Naive thymus-derived CD4-positive, alpha-beta T cell (primary cell): ENCODE measurements at regions of chr3 and their contacts with region 1.

Region 1: DNA sequence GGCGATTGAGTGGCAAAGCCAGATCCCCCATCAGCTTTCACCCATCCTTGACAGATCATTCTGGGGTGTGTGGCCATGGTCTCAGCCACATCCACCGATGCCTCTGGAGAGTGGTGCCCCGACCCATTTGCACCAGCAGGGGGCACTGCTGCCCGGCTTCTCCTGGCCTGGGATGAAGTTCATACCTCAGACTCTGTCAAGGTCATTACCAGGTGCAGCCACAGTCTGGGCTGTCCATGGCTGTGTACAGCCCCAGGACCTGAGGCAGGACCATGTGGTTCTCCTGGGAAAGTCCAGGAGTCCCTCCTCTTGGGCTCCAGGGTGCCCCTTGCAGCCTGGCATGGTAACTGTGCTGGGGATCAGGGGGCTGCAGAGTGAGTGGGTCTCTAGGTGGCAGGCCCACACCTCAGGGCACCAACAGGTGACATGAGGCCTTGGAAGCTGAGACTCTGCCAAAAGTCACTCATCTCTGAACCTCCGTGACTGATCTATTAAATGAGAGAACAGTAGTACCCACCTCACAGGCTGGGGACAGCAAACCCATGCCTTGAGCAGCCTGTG is 67.2 kb downstream of the CACNA2D2 start:
- DNase-seq: peak; percentile 48 to 81 (median 68)
- ATAC-seq: peak; percentile 92
- H3K4me3 ChIP-seq: no peak overlapping the region
- H3K4me3 Mint-ChIP-seq: no peak overlapping the region
- H3K27ac ChIP-seq: no peak overlapping the region
- H3K27ac Mint-ChIP-seq: no peak overlapping the region
- H3K4me1 ChIP-seq: no peaks in the 10 kb centered on the region
- H3K4me1 Mint-ChIP-seq: peaks cover 0 to 20% (median 4%) of the 10 kb centered on the region in 7 donors
- H3K27me3 ChIP-seq: no peaks in the 10 kb centered on the region
- H3K27me3 Mint-ChIP-seq: peaks cover 0 to 10% (median 0%) of the 10 kb centered on the region in 5 donors

Region 2: DNA sequence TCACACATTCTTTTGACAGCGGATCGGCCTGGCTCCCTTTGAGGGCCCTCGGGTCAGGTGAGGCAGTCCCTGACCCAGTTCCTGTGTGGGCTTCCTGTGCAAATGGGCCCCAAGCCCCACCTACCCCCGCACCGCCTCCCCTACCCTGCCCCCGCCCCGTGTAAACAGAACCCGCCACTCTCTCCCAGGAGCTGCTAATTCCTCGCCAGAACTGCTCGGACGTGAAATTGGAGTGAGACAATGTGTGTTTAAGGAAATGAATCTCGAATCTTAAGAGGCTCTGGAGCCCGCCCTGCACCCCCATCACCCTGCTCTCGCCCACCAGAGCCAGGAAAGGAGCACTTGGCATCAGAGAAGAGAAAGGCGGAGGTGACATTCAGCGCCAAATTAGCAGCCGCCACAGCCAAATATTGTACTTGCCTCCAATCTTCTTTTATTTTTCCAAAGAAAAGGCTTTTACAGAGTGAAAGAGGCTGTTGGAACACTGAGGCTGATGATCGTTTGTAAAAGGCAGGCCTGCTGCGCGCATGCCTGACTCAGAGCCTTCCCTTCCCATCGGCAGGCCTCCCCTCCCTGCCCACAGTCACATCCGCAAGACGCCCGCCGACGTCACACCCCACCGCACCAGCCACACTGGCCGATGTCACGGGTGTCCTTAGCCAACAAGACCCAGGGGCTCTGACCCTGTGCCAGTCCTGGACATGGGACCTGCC is 14.2 kb after region 1 on chr3:
- CTCF ChIA-PET with region 1: no interaction called
- POLR2A ChIA-PET with region 1: interaction called, 3 read pairs
- intact Hi-C with region 1: loop called in 1 of 2 experiments (anchors 1 kb)
- DNase-seq: peak; percentile 57 to 75 (median 66)
- ATAC-seq: peak; percentile 86
- H3K4me3 ChIP-seq: peak overlapping the region; percentile 60
- H3K4me3 Mint-ChIP-seq: peak overlapping the region; percentile 82 to 91 (median 86)
- H3K27ac ChIP-seq: peak overlapping the region; percentile 81
- H3K27ac Mint-ChIP-seq: peak overlapping the region; percentile 85 to 98 (median 96)
- H3K4me1 ChIP-seq: peaks cover 13 to 16% of the 10 kb centered on the region in 2 donors
- H3K4me1 Mint-ChIP-seq: peaks cover 10 to 33% (median 28%) of the 10 kb centered on the region in 7 donors
- H3K27me3 ChIP-seq: no peaks in the 10 kb centered on the region
- H3K27me3 Mint-ChIP-seq: no peaks in the 10 kb centered on the region

Region 3: DNA sequence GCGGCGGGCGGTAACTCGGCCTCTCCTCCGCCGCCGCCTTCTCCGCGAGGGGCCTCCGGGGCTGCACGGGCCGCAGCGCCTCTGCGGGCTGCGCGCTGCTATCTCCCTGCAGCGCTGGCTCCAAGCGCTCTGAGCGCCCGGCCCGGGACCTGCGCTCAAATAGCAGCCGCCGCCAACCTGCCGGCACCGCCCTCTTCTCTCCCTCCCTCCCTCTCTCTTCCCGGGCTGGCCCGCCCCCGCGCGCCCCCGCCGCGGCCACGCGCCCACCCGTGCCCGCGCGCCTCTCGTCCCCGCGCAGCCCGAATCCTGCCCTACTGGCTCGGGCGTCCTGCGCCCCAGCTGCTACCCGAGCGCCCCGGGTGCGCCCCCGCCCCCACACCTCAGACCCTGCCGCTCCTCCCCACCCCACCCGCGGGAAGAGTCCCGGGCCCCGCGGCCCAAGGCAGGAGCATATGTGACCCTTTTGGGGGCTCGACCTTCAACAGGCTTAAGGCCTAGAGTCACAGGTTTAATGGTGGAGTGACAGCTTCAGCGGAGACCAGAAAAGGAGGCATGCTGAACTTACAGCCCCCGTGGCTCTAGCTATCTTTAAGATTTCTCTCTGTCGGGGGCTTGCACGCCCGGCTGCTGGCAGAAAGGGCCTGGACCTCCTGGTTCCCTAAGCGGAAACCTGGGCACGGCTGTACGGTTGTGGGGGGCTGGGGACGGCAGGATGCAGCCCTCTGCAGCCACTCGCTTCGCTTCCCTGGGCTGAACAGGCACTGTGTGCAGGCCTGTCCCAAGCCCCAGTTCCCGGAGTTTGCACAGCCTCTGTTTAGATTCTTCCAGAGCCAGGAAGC is 67.5 kb after region 1 on chr3 and contains the start of gene CACNA2D2:
- CTCF ChIA-PET with region 1: interaction called, 3 read pairs
- POLR2A ChIA-PET with region 1: no interaction called
- intact Hi-C with region 1: loop called in 1 of 2 experiments (anchors 5 kb)
- DNase-seq: peak; percentile 54 to 79 (median 74)
- ATAC-seq: peak; percentile 94
- H3K4me3 ChIP-seq: peak within 1 kb of the TSS; percentile 44
- H3K4me3 Mint-ChIP-seq: peak within 1 kb of the TSS; percentile 37 to 85 (median 76)
- H3K27ac ChIP-seq: peak within 1 kb of the TSS; percentile 45
- H3K27ac Mint-ChIP-seq: peak within 1 kb of the TSS in 5 of 9 donors; percentile 19 to 71 (median 43)
- H3K4me1 ChIP-seq: peaks cover 0 to 5% of the 10 kb centered on the region in 2 donors
- H3K4me1 Mint-ChIP-seq: peaks cover 0 to 15% (median 10%) of the 10 kb centered on the region in 7 donors
- H3K27me3 ChIP-seq: peaks cover 0 to 5% of the 10 kb centered on the region in 2 donors
- H3K27me3 Mint-ChIP-seq: peaks cover 11 to 56% (median 21%) of the 10 kb centered on the region in 5 donors
- total RNA-seq, gene CACNA2D2: 0.97 to 6.2 (median 2.5) TPM

Region 4: DNA sequence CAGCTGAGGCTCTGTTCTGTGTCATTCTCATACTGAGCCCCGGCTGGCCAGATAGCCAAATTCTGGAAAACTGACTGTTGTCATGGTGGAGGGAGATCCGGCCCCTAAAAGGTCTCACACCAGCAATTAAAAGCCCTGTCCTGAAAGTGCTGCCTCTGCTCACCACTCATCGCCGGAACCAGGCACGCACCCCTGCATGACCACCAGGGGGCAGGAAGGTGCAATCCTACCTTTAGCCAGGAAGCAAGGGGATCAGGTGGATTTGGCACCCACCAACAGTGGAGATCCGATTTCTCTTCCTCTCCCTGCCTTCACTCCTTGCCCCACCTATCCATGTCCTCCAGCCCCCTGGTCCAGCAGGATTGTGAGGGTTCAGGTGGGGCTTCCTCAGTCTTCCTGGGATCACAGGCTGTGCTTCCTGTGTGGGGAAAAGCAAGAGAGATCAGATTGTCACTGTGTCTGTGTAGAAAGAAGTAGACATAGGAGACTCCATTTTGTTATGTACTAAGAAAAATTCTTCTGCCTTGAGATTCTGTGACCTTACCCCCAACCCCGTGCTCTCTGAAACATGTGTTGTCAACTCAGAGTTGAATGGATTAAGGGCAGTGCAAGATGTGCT is 83.4 kb after region 1 on chr3:
- CTCF ChIA-PET with region 1: interaction called, 3 read pairs
- POLR2A ChIA-PET with region 1: no interaction called
- intact Hi-C with region 1: loop called in 1 of 2 experiments (anchors 1 kb)
- DNase-seq: peak; percentile 27 to 78 (median 60)
- ATAC-seq: peak; percentile 79
- H3K4me3 ChIP-seq: no peak overlapping the region
- H3K4me3 Mint-ChIP-seq: no peak overlapping the region
- H3K27ac ChIP-seq: no peak overlapping the region
- H3K27ac Mint-ChIP-seq: no peak overlapping the region
- H3K4me1 ChIP-seq: peaks cover 0 to 3% of the 10 kb centered on the region in 2 donors
- H3K4me1 Mint-ChIP-seq: peaks cover 5 to 16% (median 12%) of the 10 kb centered on the region in 7 donors
- H3K27me3 ChIP-seq: no peaks in the 10 kb centered on the region
- H3K27me3 Mint-ChIP-seq: peaks cover 0 to 42% (median 4%) of the 10 kb centered on the region in 5 donors

Region 5: GRCh38 chr3:50542177-50543034 is 106.2 kb after region 1 on chr3:
- CTCF ChIA-PET with region 1: interaction called, 46 read pairs
- POLR2A ChIA-PET with region 1: no interaction called
- intact Hi-C with region 1: loop called in 1 of 2 experiments (anchors 1 kb)
- DNase-seq: peak; percentile 22 to 68 (median 44)
- ATAC-seq: peak; percentile 81
- H3K4me3 ChIP-seq: no peak overlapping the region
- H3K4me3 Mint-ChIP-seq: no peak overlapping the region
- H3K27ac ChIP-seq: no peak overlapping the region
- H3K27ac Mint-ChIP-seq: no peak overlapping the region
- H3K4me1 ChIP-seq: no peaks in the 10 kb centered on the region
- H3K4me1 Mint-ChIP-seq: peaks cover 0 to 5% (median 0%) of the 10 kb centered on the region in 7 donors
- H3K27me3 ChIP-seq: no peaks in the 10 kb centered on the region
- H3K27me3 Mint-ChIP-seq: peaks cover 0 to 36% (median 0%) of the 10 kb centered on the region in 5 donors

Region 6: GRCh38 chr3:50550079-50550741 is 114.0 kb after region 1 on chr3:
- CTCF ChIA-PET with region 1: interaction called, 46 read pairs
- POLR2A ChIA-PET with region 1: no interaction called
- intact Hi-C with region 1: loop called (anchors 1 kb)
- DNase-seq: peak; percentile 25 to 63 (median 45)
- ATAC-seq: peak; percentile 73
- H3K4me3 ChIP-seq: no peak overlapping the region
- H3K4me3 Mint-ChIP-seq: no peak overlapping the region
- H3K27ac ChIP-seq: no peak overlapping the region
- H3K27ac Mint-ChIP-seq: peak overlapping the region in 1 of 9 donors; percentile 28
- H3K4me1 ChIP-seq: no peaks in the 10 kb centered on the region
- H3K4me1 Mint-ChIP-seq: peaks cover 0 to 10% (median 0%) of the 10 kb centered on the region in 7 donors
- H3K27me3 ChIP-seq: no peaks in the 10 kb centered on the region
- H3K27me3 Mint-ChIP-seq: peaks cover 0 to under 1% (median 0%) of the 10 kb centered on the region in 5 donors